H1 (cell line): ENCODE measurements at regions of chr7 and their contacts with region 1.

Region 1: DNA sequence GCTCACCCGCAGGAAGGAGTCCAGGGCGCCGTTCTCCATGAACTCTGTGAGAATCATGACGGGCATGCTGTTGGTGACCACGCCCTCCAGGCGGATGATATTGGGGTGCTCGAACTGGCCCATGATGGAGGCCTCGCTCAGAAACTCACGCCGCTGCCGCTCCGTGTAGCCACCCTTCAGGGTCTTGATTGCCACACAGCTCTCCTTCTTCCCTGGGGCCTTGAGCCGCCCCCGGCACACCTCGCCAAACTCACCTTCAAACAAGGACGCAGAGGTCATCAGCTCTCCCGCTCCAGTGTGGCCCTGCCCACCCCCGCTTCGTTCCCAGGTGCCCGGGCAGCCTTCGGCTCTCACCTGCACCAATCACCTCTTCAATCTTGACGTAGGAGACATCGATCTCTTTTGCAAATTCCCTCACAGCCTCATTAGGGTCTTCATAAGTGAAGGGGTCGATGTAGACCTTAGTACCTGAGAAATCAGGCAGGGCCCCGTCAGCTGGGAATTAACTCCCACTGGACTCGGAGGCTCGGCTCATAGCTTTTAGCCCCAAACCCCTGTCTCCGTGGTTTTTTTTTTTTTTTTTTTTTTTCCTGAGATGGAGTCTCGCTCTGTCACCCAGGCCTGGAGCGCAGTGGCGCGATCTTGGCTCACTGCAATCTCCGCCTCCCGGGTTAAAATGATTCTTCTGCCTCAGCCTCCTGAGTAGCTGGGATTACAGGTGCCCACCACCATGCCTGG is 14.4 kb downstream of the EPHB4 start:
- DNase-seq: no peak
- H3K4me3 ChIP-seq: no peak overlapping the region
- H3K27ac ChIP-seq: no peak overlapping the region; the same call in 1 of the 2 replicates
- H3K4me1 ChIP-seq: no peaks in the 10 kb centered on the region
- H3K27me3 ChIP-seq: no peaks in the 10 kb centered on the region
- CTCF ChIP-seq: no peak
- EP300 ChIP-seq: no peak
- POLR2A ChIP-seq: no peak
- RAD21 ChIP-seq: no peak

Region 2: GRCh38 chr7:100827330-100828227 is 14.7 kb after region 1 on chr7 and contains the start of gene EPHB4:
- CTCF ChIA-PET with region 1: interaction called, 8 read pairs
- POLR2A ChIA-PET with region 1: interaction called, 10 read pairs
- DNase-seq: peak in 1 of 2 experiments; percentile 93
- H3K4me3 ChIP-seq: peak within 1 kb of the TSS; percentile 88 to 100 (median 92)
- H3K27ac ChIP-seq: peak within 1 kb of the TSS; percentile 81
- H3K4me1 ChIP-seq: peaks cover 0 to 13% (median 10%) of the 10 kb centered on the region in 4 experiments; a peak in 6 of 7 replicates
- H3K27me3 ChIP-seq: no peaks in the 10 kb centered on the region
- CTCF ChIP-seq: peak; percentile 55 to 63 (median 61)
- EP300 ChIP-seq: no peak
- POLR2A ChIP-seq: peak in 1 of 2 experiments; percentile 30; a peak in 1 of 3 replicates
- RAD21 ChIP-seq: peak; percentile 30 to 60; a peak in 3 of 4 replicates
- total RNA-seq, gene EPHB4: 113 and 122 TPM in 2 replicates